Prostate gland (tissue), 2 donors: ENCODE measurements at regions of chr17 and their contacts with region 1.

Region 1: DNA sequence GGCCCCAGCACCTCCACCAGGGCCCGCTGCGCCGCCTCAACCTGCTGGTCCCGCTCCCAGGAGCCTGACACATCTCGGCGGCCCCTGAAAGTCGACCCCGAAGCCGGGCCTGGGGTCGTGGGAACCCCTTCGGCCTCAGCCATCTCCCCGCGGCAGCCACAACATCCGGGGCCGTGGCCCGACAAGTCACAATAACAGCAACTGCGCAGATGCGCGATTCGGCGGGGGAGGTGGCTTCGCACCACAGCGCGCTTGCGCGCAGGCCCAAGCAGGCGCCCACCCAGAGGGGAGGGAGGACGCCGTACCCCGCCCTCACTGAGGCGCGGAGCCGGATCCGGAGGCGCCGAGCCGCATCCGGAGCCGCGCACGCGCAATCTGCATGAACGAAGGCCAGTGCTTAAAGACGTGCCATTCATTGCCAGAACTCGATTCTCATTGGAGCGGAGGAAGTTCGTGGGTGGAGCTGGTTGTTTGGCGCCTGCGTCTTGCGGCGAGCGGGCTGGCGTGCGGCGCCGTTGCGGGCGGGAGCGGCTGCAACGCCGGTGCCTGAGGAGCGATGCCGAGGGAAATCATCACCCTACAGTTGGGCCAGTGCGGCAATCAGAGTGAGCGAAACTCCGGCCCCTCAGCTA is at the starts of genes RETREG3 and TUBG1:
- DNase-seq: peak; percentile 98
- H3K4me3 ChIP-seq: peak within 1 kb of the TSS; percentile 70 to 85
- H3K27ac ChIP-seq: peak within 1 kb of the TSS; percentile 92 to 93
- H3K4me1 ChIP-seq: no peaks in the 10 kb centered on the region
- H3K27me3 ChIP-seq: no peaks in the 10 kb centered on the region
- CTCF ChIP-seq: peak in 2 of 4 experiments; percentile 33 to 45
- POLR2A ChIP-seq: peak; percentile 96
- total RNA-seq, gene RETREG3: 92.8 to 126 TPM
- total RNA-seq, gene TUBG1: 38.7 to 78.4 TPM

Region 2: GRCh38 chr17:42438600-42439567 is 170.4 kb before region 1 on chr17:
- intact Hi-C with region 1: no loop called
- DNase-seq: no peak
- H3K4me3 ChIP-seq: no peak overlapping the region
- H3K27ac ChIP-seq: no peak overlapping the region
- H3K4me1 ChIP-seq: no peaks in the 10 kb centered on the region
- H3K27me3 ChIP-seq: no peaks in the 10 kb centered on the region
- CTCF ChIP-seq: no peak
- POLR2A ChIP-seq: no peak

Region 3: GRCh38 chr17:42659079-42659931 is 50.0 kb after region 1 on chr17 and contains the start of gene TUBG2:
- intact Hi-C with region 1: loop called (anchors 5 kb)
- DNase-seq: peak; percentile 81
- H3K4me3 ChIP-seq: peak within 1 kb of the TSS; percentile 52 to 54
- H3K27ac ChIP-seq: peak within 1 kb of the TSS; percentile 79 to 82
- H3K4me1 ChIP-seq: no peaks in the 10 kb centered on the region
- H3K27me3 ChIP-seq: no peaks in the 10 kb centered on the region
- CTCF ChIP-seq: peak in 1 of 4 experiments; percentile 16
- POLR2A ChIP-seq: peak; percentile 85
- total RNA-seq, gene TUBG2: 36.8 to 57.7 TPM